PC-3 (cell line): ENCODE measurements at regions of chr9 and their contacts with region 1.

Region 1: DNA sequence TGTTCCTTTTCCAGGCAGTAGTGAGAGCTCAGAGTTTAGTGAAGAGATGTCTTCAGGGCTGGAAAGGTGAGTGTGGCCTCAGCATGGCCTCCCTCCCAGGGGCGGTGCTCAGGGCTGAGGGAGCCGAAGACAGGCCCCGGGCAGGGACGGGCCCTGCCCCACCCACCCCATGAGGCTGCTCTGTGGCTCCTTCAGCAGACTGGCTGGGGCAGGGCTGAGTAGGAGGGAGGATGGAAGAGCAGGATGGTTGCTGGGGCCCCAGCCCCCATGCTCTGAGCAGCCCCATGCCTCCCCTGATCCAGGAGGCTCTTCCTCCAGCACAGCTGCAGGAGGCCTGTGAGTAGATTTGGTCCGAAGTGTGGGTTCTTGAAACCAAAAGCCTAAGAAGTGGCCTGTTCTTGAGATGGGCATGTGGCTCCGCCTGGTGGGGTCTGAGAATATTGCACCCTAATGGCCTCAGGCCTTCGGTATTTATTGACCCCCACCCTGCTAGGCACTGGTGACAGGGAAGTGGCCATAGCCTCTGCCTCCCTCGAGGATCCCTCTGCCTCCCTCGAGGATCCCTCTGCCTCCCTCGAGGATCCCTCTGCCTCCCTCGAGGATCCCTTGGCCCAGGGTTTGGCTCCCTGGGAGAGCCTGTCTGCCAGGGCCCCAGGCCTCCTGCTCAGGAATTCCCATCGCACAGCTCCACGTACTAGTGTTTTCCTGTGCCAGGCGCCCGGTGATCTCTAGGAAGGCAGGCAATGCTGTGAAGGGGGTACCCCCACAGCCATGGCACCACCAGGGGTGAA is 65.4 kb upstream of the GARNL3 start:
- DNase-seq: peak; percentile 78
- ATAC-seq: peak; percentile 65
- H3K4me3 ChIP-seq: no peak overlapping the region
- H3K27ac ChIP-seq: no peak overlapping the region
- H3K4me1 ChIP-seq: peaks cover 16% of the 10 kb centered on the region
- H3K27me3 ChIP-seq: no peaks in the 10 kb centered on the region
- CTCF ChIP-seq: peak; percentile 80

Region 2: DNA sequence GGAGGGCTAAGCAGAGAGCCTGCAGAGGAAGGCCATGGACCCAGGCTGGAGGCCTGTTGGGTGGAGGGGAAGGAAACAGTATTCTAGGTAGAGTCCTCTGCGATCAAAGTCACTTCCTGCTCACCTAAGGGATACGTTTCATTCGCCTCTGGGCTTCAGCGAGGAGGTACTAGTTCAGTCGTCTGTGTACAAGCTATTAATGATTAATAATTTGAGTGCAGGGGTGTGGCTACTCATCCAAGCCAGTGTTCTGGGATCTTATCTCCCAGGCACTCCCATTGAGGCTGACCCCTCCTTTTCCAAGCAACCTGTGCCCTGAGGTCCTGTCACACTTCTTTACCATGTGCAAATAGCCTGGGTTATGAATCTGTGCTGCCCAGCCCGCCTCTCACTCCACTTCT is 259.4 kb before region 1 on chr9:
- CTCF ChIA-PET with region 1: interaction called, 3 read pairs
- POLR2A ChIA-PET with region 1: no interaction called
- intact Hi-C with region 1: loop called (anchors 1 kb)
- DNase-seq: no peak
- ATAC-seq: no peak; the same call in 1 of the 2 replicates
- H3K4me3 ChIP-seq: no peak overlapping the region
- H3K27ac ChIP-seq: no peak overlapping the region
- H3K4me1 ChIP-seq: no peaks in the 10 kb centered on the region
- H3K27me3 ChIP-seq: no peaks in the 10 kb centered on the region
- CTCF ChIP-seq: no peak

Region 3: DNA sequence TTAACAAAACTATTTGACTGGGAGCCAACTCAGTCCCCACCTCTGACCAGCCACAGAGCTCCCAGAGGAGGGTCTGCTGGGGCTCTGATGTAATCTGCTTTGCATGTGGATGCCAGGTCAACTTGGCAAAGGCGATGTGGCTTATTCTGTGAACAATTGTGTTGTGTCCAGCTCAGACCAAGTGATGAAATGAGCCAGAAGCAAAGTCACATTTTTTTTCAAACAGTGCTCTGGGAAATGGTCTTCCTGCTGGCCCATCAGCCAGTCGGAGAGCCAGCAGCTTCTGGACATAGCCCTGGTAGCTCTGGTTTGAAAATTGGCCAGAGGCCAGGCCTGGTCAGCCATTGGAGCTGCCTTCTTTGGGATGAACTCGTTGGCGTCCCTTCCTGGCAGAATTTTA is 163.2 kb before region 1 on chr9:
- CTCF ChIA-PET with region 1: no interaction called
- POLR2A ChIA-PET with region 1: no interaction called
- intact Hi-C with region 1: no loop called
- DNase-seq: no peak
- ATAC-seq: no peak
- H3K4me3 ChIP-seq: no peak overlapping the region
- H3K27ac ChIP-seq: no peak overlapping the region
- H3K4me1 ChIP-seq: no peaks in the 10 kb centered on the region; the same call in 1 of the 2 replicates
- H3K27me3 ChIP-seq: no peaks in the 10 kb centered on the region
- CTCF ChIP-seq: no peak

Region 4: GRCh38 chr9:127166651-127167524 is 32.3 kb before region 1 on chr9:
- CTCF ChIA-PET with region 1: no interaction called
- POLR2A ChIA-PET with region 1: no interaction called
- intact Hi-C with region 1: no loop called
- DNase-seq: peak; percentile 75
- ATAC-seq: peak; percentile 79
- H3K4me3 ChIP-seq: no peak overlapping the region
- H3K27ac ChIP-seq: no peak overlapping the region
- H3K4me1 ChIP-seq: peaks cover 17% of the 10 kb centered on the region
- H3K27me3 ChIP-seq: no peaks in the 10 kb centered on the region
- CTCF ChIP-seq: no peak